Dendritic cell treated with granulocyte-macrophage colony-stimulating factor and Interleukin-4, amounts not matched to agents 40 ng/mL and 50 ng/mL, for 4 days (primary cell): ENCODE measurements at regions of chr5 and their contacts with region 1.

Region 1: GRCh38 chr5:80407735-80408482 is at the start of gene ZFYVE16:
- H3K4me3 Mint-ChIP-seq: peak within 1 kb of the TSS; percentile 89
- H3K27ac Mint-ChIP-seq: peak within 1 kb of the TSS; percentile 99
- H3K4me1 Mint-ChIP-seq: peaks cover 46% of the 10 kb centered on the region
- H3K27me3 Mint-ChIP-seq: no peaks in the 10 kb centered on the region

Region 2: GRCh38 chr5:80346055-80346454 is 61.9 kb before region 1 on chr5:
- intact Hi-C with region 1: loop called (anchors 2 kb)
- H3K4me3 Mint-ChIP-seq: no peak overlapping the region
- H3K27ac Mint-ChIP-seq: no peak overlapping the region
- H3K4me1 Mint-ChIP-seq: peaks cover 24% of the 10 kb centered on the region
- H3K27me3 Mint-ChIP-seq: peaks cover 8% of the 10 kb centered on the region